ENCODE measurements at regions of chr3 and their contacts with region 1.

Region 1: GRCh38 chr3:72818092-72818773 is 30.0 kb downstream of the SHQ1 start:
- DNase-seq: peak in 1 of 5 donors; percentile 5
- H3K4me3 ChIP-seq: no peak overlapping the region
- H3K4me3 Mint-ChIP-seq: no peak overlapping the region
- H3K27ac ChIP-seq: no peak overlapping the region
- H3K27ac Mint-ChIP-seq: peak overlapping the region in 1 of 7 donors; percentile 59
- H3K4me1 ChIP-seq: peaks cover 14% of the 10 kb centered on the region
- H3K4me1 Mint-ChIP-seq: peaks cover 0 to 4% (median 0%) of the 10 kb centered on the region in 4 donors
- H3K27me3 ChIP-seq: no peaks in the 10 kb centered on the region
- H3K27me3 Mint-ChIP-seq: no peaks in the 10 kb centered on the region

Region 2: GRCh38 chr3:71875461-71875947 is 942.7 kb before region 1 on chr3:
- CTCF ChIA-PET with region 1: interaction called, 179 read pairs
- POLR2A ChIA-PET with region 1: no interaction called
- intact Hi-C with region 1: loop called (anchors 1 kb)
- DNase-seq: peak; percentile 65 to 73 (median 68)
- H3K4me3 ChIP-seq: no peak overlapping the region
- H3K4me3 Mint-ChIP-seq: peak overlapping the region in 1 of 8 donors; percentile 43
- H3K27ac ChIP-seq: no peak overlapping the region
- H3K27ac Mint-ChIP-seq: no peak overlapping the region
- H3K4me1 ChIP-seq: peaks cover 26% of the 10 kb centered on the region
- H3K4me1 Mint-ChIP-seq: peaks cover 18 to 24% (median 20%) of the 10 kb centered on the region in 4 donors
- H3K27me3 ChIP-seq: no peaks in the 10 kb centered on the region
- H3K27me3 Mint-ChIP-seq: peaks cover 3 to 5% of the 10 kb centered on the region in 2 donors

Region 3: GRCh38 chr3:71955240-71956068 is 862.8 kb before region 1 on chr3:
- CTCF ChIA-PET with region 1: interaction called, 3 read pairs
- POLR2A ChIA-PET with region 1: no interaction called
- intact Hi-C with region 1: loop called (anchors 10 kb)
- DNase-seq: no peak
- H3K4me3 ChIP-seq: no peak overlapping the region
- H3K4me3 Mint-ChIP-seq: peak overlapping the region in 1 of 8 donors; percentile 24
- H3K27ac ChIP-seq: no peak overlapping the region
- H3K27ac Mint-ChIP-seq: no peak overlapping the region
- H3K4me1 ChIP-seq: no peaks in the 10 kb centered on the region
- H3K4me1 Mint-ChIP-seq: peaks cover 0 to 9% (median 0%) of the 10 kb centered on the region in 4 donors
- H3K27me3 ChIP-seq: no peaks in the 10 kb centered on the region
- H3K27me3 Mint-ChIP-seq: no peaks in the 10 kb centered on the region

Region 4: GRCh38 chr3:72836923-72837322 is 18.7 kb after region 1 on chr3:
- CTCF ChIA-PET with region 1: interaction called, 10 read pairs
- POLR2A ChIA-PET with region 1: no interaction called
- intact Hi-C with region 1: no loop called
- DNase-seq: no peak
- H3K4me3 ChIP-seq: no peak overlapping the region
- H3K4me3 Mint-ChIP-seq: no peak overlapping the region
- H3K27ac ChIP-seq: no peak overlapping the region
- H3K27ac Mint-ChIP-seq: no peak overlapping the region
- H3K4me1 ChIP-seq: no peaks in the 10 kb centered on the region
- H3K4me1 Mint-ChIP-seq: peaks cover 0 to 4% (median 2%) of the 10 kb centered on the region in 4 donors
- H3K27me3 ChIP-seq: no peaks in the 10 kb centered on the region
- H3K27me3 Mint-ChIP-seq: no peaks in the 10 kb centered on the region